Breast epithelium (tissue), 4 donors: ENCODE measurements at regions of chr3 and their contacts with region 1.

Region 1: DNA sequence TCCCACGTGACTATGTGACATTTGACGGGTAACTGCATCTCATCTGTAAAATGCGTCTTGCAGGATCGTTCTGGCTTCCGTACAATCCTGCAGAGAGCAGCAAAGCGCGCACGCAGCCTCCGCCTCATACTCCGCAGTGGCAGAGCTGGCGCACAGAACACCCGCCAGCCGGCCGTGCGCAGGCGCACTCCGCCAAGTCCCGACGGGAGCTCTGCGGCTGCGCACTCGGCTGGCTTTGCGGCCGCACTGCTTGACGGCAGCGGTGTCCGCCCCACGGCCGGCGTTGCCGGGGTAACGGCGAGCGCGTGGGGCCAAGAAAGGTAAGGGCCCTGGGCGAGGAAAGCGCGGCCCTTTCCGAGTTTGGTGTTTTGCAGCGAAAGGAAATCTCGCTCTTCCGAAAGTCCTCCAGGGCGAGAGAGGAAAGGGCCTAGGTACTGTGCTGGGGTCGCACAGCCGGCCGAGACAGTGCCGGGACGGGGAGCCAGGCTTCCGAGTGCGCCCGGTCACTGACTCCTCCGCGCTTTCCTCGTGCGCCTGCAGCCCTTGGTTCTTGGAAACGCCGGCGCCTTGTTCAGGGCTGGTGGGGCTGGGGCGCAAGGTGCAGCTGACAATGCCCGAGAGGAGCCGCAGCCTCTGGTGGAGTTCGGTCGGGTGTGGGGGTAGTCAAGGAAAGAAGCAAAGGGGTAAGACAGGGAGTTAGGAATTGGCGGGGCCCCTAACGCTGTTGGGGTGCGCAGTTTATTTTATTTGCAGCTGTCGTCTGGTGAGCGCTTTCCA is at the start of gene TSEN2:
- DNase-seq: peak; percentile 90 to 92
- H3K4me3 ChIP-seq: peak within 1 kb of the TSS; percentile 70 to 95 (median 73)
- H3K27ac ChIP-seq: peak within 1 kb of the TSS; percentile 74 to 91
- H3K4me1 ChIP-seq: peaks cover 0 to 5% of the 10 kb centered on the region in 2 donors
- H3K27me3 ChIP-seq: no peaks in the 10 kb centered on the region
- CTCF ChIP-seq: no peak
- POLR2A ChIP-seq: peak; percentile 37
- total RNA-seq, gene TSEN2: 20.0 to 32.8 (median 26.5) TPM

Region 2: DNA sequence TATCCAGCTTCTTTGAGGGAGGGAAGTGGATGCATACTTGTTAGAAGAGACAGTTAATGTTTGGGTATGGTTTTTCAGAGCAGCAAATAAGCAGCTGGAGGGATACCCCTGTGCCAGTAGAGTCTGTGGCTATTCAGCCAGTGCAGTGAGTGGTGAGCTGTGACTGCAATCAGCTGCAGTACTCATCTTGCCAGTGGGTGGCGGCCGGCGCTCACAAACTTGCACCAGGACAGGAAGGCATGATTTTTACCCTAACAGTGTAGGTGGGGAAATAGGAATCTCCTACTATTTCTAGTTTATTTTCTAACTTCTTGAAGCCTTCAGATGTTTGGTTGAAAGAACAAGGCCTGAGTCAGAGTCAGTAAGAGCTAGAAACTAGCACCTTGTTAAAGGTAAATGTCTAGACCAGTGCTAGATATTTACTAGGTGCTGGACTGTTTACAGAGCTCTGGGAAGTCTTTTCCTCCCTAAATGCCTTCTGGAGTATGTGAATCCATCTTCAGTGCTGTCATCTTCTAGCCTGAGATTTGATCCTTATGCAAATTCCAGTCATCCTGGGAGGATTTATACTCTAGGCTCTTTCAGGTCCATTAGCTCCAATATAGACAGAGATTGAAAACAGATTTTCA is 349.2 kb before region 1 on chr3:
- intact Hi-C with region 1: loop called (anchors 10 kb)
- DNase-seq: peak; percentile 57 to 75
- H3K4me3 ChIP-seq: no peak overlapping the region
- H3K27ac ChIP-seq: peak overlapping the region; percentile 12 to 36
- H3K4me1 ChIP-seq: no peaks in the 10 kb centered on the region
- H3K27me3 ChIP-seq: no peaks in the 10 kb centered on the region
- CTCF ChIP-seq: peak; percentile 77 to 96 (median 88)
- POLR2A ChIP-seq: no peak

Region 3: DNA sequence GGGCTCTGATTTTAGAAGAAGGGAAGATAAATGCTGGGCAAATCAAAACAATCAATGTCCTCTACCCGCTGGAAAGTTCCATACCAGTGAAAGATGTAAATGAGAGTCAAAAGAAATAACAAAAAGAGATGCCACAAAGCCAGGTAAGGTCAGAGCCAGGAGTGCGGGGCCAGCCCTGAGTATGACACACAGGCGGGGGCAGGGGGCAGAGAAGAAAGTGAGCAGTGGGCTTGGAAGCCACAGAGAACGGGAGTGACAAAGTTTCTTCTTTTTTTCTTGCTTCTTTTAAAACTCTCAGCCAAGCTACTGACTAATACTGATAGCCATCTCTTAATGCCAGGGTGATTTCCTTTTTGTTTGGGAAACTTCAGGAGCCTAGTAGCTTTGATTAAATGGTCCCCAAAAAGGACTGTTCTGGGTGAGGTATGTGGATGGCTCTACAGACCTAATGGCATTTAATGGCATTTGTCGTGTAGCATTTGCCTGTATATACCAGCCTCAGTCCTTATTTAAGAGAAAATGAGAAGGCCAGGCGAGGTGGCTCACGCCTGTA is 23.2 kb before region 1 on chr3:
- intact Hi-C with region 1: loop called (anchors 2 kb)
- DNase-seq: no peak
- H3K4me3 ChIP-seq: no peak overlapping the region
- H3K27ac ChIP-seq: no peak overlapping the region
- H3K4me1 ChIP-seq: no peaks in the 10 kb centered on the region
- H3K27me3 ChIP-seq: no peaks in the 10 kb centered on the region
- CTCF ChIP-seq: no peak
- POLR2A ChIP-seq: no peak